ENCODE measurements at regions of chr2 and their contacts with region 1.

Region 1: GRCh38 chr2:111897924-111898702 is at the start of gene MERTK:
- DNase-seq: peak; percentile 83
- CTCF ChIP-seq: peak; percentile 66

Region 2: DNA sequence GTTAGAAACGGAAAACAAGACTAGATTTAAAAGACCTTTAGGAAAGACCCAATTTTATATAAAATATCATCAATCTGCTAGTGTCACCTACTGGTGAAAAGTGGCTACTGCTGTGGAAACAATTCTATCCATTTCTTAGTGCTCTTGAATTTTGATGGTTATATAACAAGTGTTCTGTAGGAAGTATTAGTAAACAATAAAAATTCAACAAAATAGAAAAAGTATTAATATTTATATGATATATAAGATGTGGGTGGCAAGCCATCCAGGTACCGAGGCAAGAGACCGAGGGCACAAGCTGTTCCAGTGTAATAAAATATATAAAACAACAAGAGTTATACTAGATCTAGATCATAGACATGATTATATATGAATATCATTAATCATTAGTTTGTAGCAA is 150.8 kb after region 1 on chr2:
- in situ Hi-C with region 1: loop called (anchors 5 kb)
- DNase-seq: peak; percentile 42
- CTCF ChIP-seq: peak; percentile 57

Measured in GM13976 (cell line).